ENCODE measurements at regions of chr16 and their contacts with region 1.

Region 1: GRCh38 chr16:84970447-84971127 is 40.7 kb downstream of the ZDHHC7 start:
- DNase-seq: peak; percentile 68 to 91 (median 80)
- H3K4me3 ChIP-seq: no peak overlapping the region
- H3K27ac ChIP-seq: no peak overlapping the region
- H3K4me1 ChIP-seq: peaks cover 0 to 10% of the 10 kb centered on the region in 2 donors
- H3K27me3 ChIP-seq: no peaks in the 10 kb centered on the region
- CTCF ChIP-seq: peak; percentile 94 to 98 (median 97)
- POLR2A ChIP-seq: no peak

Region 2: DNA sequence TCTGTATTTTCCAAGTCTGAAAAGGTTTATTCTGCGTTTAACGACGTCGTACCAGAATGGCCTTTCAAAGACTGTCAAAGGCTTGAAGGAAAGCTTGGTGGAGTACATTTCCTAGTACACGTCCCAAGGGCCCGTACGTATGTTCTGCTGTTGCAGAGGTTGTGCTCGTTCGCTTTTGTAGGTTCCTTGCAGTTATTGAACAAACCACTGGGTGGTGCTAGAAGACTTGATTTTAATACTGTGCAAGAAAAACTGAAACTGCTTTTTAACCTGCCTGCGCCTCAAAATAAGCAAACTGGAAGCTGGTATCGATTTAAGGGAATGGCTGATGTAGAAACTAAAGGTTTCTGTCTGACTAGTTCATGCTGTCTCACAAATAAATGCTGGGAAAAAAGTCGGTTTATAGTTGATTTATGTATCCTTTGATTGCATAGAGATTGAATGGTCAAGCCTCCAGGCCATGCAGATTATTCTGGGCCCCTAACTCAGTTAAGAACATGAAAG is 216.2 kb before region 1 on chr16:
- intact Hi-C with region 1: loop called (anchors 5 kb)
- DNase-seq: peak; percentile 69 to 91 (median 79)
- H3K4me3 ChIP-seq: no peak overlapping the region
- H3K27ac ChIP-seq: peak overlapping the region in 3 of 5 donors; percentile 10 to 48 (median 37)
- H3K4me1 ChIP-seq: peaks cover 14 to 52% of the 10 kb centered on the region in 2 donors
- H3K27me3 ChIP-seq: no peaks in the 10 kb centered on the region
- CTCF ChIP-seq: peak; percentile 70 to 94 (median 88)
- POLR2A ChIP-seq: no peak

Region 3: DNA sequence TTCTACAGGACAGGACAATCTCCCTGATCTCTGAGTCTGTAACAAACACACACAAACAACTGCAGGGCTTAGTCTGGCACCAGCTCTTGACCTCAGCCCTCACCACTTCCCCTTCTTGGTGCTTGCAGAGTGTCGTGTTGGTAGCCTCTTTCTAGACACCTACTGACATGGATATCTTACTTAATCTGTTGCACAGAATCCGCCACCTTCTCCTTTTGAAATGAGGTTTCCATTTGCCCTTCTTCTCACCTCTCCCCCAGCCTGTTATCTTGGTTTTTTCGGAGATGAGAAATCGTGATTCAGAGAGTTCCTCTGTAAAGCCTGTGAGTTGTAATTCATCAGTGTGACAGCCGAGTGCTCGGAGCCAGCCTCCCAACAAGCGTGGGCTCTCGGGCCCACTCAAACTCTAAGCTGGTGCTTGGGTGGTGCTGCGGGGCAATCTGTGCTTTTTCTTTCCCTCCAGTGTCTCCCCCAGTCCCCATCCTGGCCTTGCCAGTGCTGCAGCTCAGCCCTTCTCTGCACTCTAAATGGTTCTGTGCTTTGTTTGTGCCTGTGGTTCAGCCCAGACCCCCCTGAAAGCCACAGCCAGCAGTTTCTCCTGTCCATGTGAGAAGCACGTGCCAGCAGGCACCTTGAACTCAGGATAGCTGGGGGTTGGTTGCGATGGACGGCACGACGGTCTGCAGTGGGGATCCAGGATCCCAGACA is 85.1 kb after region 1 on chr16:
- intact Hi-C with region 1: no loop called
- DNase-seq: peak in 6 of 7 donors; percentile 56 to 86 (median 68)
- H3K4me3 ChIP-seq: peak overlapping the region in 2 of 4 donors; percentile 8 to 31
- H3K27ac ChIP-seq: peak overlapping the region; percentile 57 to 85 (median 72)
- H3K4me1 ChIP-seq: peaks cover 13 to 30% of the 10 kb centered on the region in 2 donors
- H3K27me3 ChIP-seq: no peaks in the 10 kb centered on the region
- CTCF ChIP-seq: no peak
- POLR2A ChIP-seq: no peak

Measured in adrenal gland (tissue), 19 donors.